ENCODE measurements at regions of chr12 and their contacts with region 1.

Region 1: DNA sequence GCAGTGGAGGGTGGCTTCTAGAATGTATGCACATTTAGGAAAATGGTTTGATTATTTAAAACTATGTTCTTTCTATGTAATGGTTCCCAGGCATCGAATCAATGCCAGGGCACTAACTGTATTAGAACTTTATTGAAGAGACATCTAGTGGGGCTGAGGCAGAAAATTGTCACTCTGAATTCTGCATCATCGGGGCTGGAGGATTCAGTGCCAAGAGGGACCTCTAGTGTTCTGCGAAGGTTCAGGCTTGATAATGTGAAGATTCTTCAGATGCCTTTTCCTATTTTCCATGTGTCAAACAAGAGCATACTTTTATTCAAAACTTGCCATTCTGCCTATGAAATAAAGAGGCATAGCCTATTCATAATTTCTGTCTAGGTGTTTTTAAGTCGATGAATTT is 146.3 kb downstream of the CAND1 start:
- DNase-seq: peak; percentile 19
- H3K4me3 Mint-ChIP-seq: no peak overlapping the region
- H3K27ac Mint-ChIP-seq: no peak overlapping the region
- H3K4me1 Mint-ChIP-seq: no peaks in the 10 kb centered on the region
- H3K27me3 Mint-ChIP-seq: no peaks in the 10 kb centered on the region

Region 2: GRCh38 chr12:67025543-67026114 is 389.8 kb before region 1 on chr12:
- CTCF ChIA-PET with region 1: no interaction called
- intact Hi-C with region 1: loop called (anchors 10 kb)
- DNase-seq: peak; percentile 67
- H3K4me3 Mint-ChIP-seq: no peak overlapping the region
- H3K27ac Mint-ChIP-seq: no peak overlapping the region
- H3K4me1 Mint-ChIP-seq: peaks cover 3% of the 10 kb centered on the region
- H3K27me3 Mint-ChIP-seq: no peaks in the 10 kb centered on the region

Region 3: GRCh38 chr12:67161322-67161918 is 254.1 kb before region 1 on chr12:
- CTCF ChIA-PET with region 1: no interaction called
- intact Hi-C with region 1: loop called (anchors 1 kb)
- DNase-seq: peak; percentile 70
- H3K4me3 Mint-ChIP-seq: no peak overlapping the region
- H3K27ac Mint-ChIP-seq: no peak overlapping the region
- H3K4me1 Mint-ChIP-seq: no peaks in the 10 kb centered on the region
- H3K27me3 Mint-ChIP-seq: no peaks in the 10 kb centered on the region

Region 4: GRCh38 chr12:67355578-67356379 is 59.7 kb before region 1 on chr12:
- CTCF ChIA-PET with region 1: interaction called, 3 read pairs
- intact Hi-C with region 1: loop called (anchors 1 kb)
- DNase-seq: peak; percentile 17
- H3K4me3 Mint-ChIP-seq: no peak overlapping the region
- H3K27ac Mint-ChIP-seq: no peak overlapping the region
- H3K4me1 Mint-ChIP-seq: peaks cover 25% of the 10 kb centered on the region
- H3K27me3 Mint-ChIP-seq: no peaks in the 10 kb centered on the region

Region 5: DNA sequence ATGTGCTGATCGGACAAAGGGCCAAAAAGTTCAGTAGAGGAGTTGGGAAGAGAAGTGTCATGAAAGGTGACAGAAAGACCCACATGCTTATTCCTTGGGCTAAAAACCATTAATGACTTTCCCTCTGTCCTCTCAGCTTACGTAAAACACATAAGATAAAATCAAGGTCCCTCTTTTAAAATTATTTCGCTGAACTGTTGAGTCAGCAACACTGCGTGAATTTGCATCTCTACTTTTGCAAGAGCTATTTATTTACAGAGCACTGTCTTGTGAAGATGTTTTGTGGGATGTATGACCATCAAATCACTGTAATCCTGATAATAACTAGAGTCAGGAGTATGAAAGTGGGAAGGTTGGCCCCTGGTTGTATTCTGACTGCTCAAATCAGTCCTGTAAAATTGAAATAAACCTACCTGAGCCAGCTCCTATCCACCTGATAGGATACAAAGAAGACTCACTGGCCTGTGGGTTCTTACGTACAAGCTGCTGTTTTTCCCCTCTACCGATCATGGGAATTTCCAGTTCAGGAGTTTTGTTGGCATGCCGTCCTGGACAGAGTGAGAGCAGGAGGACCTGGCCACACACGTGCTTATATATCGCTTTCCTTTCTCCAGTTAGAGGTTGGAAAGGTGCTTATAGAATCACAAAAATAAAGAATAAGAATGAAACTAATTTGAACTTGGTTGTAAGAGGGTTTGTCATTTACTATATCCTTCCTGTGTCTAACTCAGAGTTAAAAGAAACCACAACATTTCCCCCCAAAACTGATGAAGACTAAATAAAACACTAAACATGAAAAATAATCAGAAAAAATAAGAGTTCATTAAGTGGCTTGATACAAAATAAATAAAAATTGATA is 616.6 kb after region 1 on chr12:
- CTCF ChIA-PET with region 1: no interaction called
- intact Hi-C with region 1: no loop called
- DNase-seq: no peak
- H3K4me3 Mint-ChIP-seq: peak overlapping the region; percentile 28
- H3K27ac Mint-ChIP-seq: peak overlapping the region; percentile 67
- H3K4me1 Mint-ChIP-seq: peaks cover 20% of the 10 kb centered on the region
- H3K27me3 Mint-ChIP-seq: no peaks in the 10 kb centered on the region

Measured in activated naive CD4-positive, alpha-beta T cell treated with anti-CD3 and anti-CD28 coated beads for 36 hours (primary cell).